Ascending aorta (tissue), 2 donors: ENCODE measurements at regions of chr6 and their contacts with region 1.

Region 1: GRCh38 chr6:169212897-169213813 is 40.5 kb downstream of the THBS2 start:
- DNase-seq: peak; percentile 61 to 94
- H3K4me3 ChIP-seq: peak overlapping the region; percentile 39 to 45
- H3K27ac ChIP-seq: peak overlapping the region; percentile 93 to 95
- H3K4me1 ChIP-seq: peaks cover 17 to 26% of the 10 kb centered on the region in 2 donors
- H3K27me3 ChIP-seq: no peaks in the 10 kb centered on the region
- CTCF ChIP-seq: peak; percentile 41 to 61 (median 42)

Region 2: DNA sequence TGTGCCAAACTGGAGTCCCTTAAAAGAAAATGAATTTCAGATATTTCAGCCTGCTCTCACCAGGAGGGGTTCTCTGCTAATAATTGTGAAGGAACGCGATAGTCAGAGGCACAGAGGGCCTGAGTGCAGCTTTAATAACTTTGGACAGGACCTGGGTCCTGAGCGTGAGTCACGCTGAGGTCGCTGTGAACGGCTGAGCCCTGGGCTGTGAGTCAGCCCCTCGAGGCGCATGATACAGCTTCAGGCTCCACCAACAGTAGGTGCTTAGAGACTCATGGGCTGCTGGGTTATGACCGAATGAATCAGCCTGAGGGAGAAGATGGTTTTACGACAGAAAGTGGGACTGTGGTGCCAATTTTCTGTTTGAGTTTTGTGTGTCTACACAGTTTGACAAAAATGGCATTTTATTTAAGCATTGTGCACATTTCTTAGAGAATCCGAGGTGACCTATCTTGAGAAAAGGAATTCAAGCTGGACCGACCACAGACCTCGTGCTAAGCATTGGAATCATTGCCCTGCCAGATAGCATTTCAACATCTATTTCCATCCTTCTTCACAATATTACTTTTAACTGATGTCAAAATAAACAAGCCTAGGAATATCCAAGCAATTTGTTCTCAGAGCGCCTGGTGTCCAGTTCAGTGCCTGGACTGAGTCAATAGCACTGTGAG is 142.5 kb before region 1 on chr6:
- intact Hi-C with region 1: loop called (anchors 5 kb)
- DNase-seq: peak; percentile 91 to 97
- H3K4me3 ChIP-seq: no peak overlapping the region
- H3K27ac ChIP-seq: peak overlapping the region; percentile 71 to 72
- H3K4me1 ChIP-seq: peaks cover 0 to 41% of the 10 kb centered on the region in 2 donors
- H3K27me3 ChIP-seq: no peaks in the 10 kb centered on the region
- CTCF ChIP-seq: no peak

Region 3: DNA sequence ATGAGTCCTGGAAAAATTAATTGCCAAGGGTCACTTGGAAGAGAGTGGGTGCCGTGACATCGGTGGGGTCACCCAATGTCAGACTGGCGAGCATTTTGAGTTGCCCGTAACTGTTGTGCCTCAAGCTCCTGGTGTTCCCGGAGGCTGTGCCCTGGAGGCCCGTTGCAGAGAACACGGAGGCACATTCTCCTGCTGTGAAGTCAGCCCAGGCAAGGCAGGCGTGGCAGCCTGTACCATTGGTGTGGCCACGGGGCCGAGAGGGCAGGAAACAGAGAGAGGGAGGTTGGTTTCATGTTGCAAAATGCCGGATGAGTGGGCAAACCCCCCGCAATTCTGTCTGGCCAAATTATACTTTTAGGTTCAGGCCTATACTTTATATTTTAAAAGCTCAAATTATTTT is 40.7 kb before region 1 on chr6:
- intact Hi-C with region 1: loop called (anchors 2 kb)
- DNase-seq: peak; percentile 84 to 97
- H3K4me3 ChIP-seq: no peak overlapping the region
- H3K27ac ChIP-seq: peak overlapping the region; percentile 87 to 95
- H3K4me1 ChIP-seq: peaks cover 12 to 55% of the 10 kb centered on the region in 2 donors
- H3K27me3 ChIP-seq: no peaks in the 10 kb centered on the region
- CTCF ChIP-seq: no peak

Region 4: GRCh38 chr6:169190144-169190584 is 23.0 kb before region 1 on chr6:
- intact Hi-C with region 1: loop called (anchors 2 kb)
- DNase-seq: peak; percentile 55 to 95
- H3K4me3 ChIP-seq: no peak overlapping the region
- H3K27ac ChIP-seq: peak overlapping the region; percentile 81 to 87
- H3K4me1 ChIP-seq: peaks cover 10 to 39% of the 10 kb centered on the region in 2 donors
- H3K27me3 ChIP-seq: no peaks in the 10 kb centered on the region
- CTCF ChIP-seq: no peak